MCF 10A (cell line): ENCODE measurements at regions of chr12 and their contacts with region 1.

Region 1: DNA sequence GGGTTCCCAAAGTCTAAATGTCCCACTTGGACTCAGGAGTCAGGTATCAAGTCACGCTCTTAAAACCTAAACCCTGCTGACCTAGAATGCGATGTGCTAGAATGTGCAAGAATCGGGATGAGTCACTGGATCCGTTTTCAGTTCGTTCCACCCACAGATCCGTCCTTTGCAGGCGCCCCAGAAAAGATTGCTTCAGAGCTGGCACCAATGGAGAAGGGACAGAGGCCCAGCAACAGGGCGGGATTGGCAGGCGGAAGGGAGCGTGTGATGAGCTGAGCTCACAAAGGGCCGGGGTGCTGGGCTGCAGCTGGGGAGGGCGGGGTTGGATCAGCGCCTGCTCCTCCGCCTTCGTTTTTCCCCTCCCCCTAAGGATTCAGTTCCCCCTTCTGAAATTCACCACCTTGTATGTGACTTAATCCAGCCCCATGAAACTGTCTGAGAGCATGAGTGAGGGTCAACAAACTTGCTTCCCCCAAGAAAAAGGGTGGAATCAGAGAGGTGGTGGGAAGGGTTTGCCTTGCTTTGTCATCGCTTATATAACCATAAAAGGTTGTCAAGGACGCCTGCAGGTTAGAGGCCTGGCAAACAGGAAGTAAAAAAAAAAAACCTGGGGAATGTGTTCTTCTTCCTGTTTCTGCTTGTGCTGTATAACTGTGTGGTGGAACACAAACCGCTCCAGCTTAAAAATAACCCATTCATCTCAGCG is 2.8 kb upstream of the UBC start:
- DNase-seq: peak; percentile 100
- H3K4me3 Mint-ChIP-seq: peak overlapping the region; percentile 95
- H3K27ac Mint-ChIP-seq: peak overlapping the region; percentile 100
- H3K4me1 Mint-ChIP-seq: peaks cover 44% of the 10 kb centered on the region
- H3K27me3 Mint-ChIP-seq: no peaks in the 10 kb centered on the region
- CTCF ChIP-seq: no peak

Region 2: DNA sequence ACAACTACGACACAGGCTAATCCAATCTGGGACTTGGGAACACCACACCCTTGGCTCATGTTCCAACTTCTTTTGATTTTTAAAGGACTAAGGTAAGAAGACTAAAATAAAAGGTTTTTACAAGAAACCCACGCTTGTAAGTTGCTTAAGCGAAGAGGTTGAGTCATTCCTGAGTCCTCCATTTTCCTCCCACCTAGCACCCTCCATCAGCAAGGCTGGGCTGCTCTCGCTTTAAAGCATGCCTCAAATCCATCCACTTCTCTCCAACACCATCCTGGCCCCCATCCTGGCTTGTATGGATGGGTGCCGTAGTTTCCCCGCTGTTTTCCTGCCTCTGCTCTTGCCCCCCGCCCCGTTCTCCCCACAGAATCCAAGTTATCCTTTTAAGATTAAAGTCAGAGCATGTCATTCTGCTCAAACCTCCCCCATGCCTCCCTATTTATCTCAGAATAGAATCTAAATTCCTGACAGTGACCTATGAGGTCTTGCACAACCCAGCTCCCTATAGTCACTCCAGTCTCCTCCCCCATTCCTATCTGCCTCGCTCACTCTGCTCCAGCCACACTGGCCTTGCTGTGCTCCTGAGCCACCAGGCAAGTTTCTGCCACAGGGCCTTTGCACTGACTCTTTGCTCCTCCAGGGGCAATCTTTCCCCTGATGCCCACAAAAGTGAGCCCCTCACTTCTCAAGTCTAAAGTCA is 88.1 kb before region 1 on chr12:
- CTCF ChIA-PET with region 1: no interaction called
- POLR2A ChIA-PET with region 1: interaction called, 20 read pairs
- intact Hi-C with region 1: no loop called
- DNase-seq: peak; percentile 91
- H3K4me3 Mint-ChIP-seq: peak overlapping the region; percentile 58
- H3K27ac Mint-ChIP-seq: peak overlapping the region; percentile 96
- H3K4me1 Mint-ChIP-seq: peaks cover 43% of the 10 kb centered on the region
- H3K27me3 Mint-ChIP-seq: no peaks in the 10 kb centered on the region
- CTCF ChIP-seq: no peak

Region 3: GRCh38 chr12:124837958-124838803 is 79.1 kb before region 1 on chr12:
- CTCF ChIA-PET with region 1: no interaction called
- POLR2A ChIA-PET with region 1: interaction called, 25 read pairs
- intact Hi-C with region 1: no loop called
- DNase-seq: peak; percentile 99
- H3K4me3 Mint-ChIP-seq: no peak overlapping the region
- H3K27ac Mint-ChIP-seq: peak overlapping the region; percentile 35
- H3K4me1 Mint-ChIP-seq: peaks cover 21% of the 10 kb centered on the region
- H3K27me3 Mint-ChIP-seq: no peaks in the 10 kb centered on the region
- CTCF ChIP-seq: no peak

Region 4: GRCh38 chr12:124863416-124864325 is 53.6 kb before region 1 on chr12 and contains the start of gene SCARB1:
- CTCF ChIA-PET with region 1: interaction called, 5 read pairs
- POLR2A ChIA-PET with region 1: interaction called, 13 read pairs
- intact Hi-C with region 1: no loop called
- DNase-seq: peak; percentile 83
- H3K4me3 Mint-ChIP-seq: peak within 1 kb of the TSS; percentile 76
- H3K27ac Mint-ChIP-seq: peak within 1 kb of the TSS; percentile 86
- H3K4me1 Mint-ChIP-seq: peaks cover 32% of the 10 kb centered on the region
- H3K27me3 Mint-ChIP-seq: no peaks in the 10 kb centered on the region
- CTCF ChIP-seq: no peak
- total RNA-seq, gene SCARB1: 48.2 and 71.0 TPM in 2 replicates

Region 5: DNA sequence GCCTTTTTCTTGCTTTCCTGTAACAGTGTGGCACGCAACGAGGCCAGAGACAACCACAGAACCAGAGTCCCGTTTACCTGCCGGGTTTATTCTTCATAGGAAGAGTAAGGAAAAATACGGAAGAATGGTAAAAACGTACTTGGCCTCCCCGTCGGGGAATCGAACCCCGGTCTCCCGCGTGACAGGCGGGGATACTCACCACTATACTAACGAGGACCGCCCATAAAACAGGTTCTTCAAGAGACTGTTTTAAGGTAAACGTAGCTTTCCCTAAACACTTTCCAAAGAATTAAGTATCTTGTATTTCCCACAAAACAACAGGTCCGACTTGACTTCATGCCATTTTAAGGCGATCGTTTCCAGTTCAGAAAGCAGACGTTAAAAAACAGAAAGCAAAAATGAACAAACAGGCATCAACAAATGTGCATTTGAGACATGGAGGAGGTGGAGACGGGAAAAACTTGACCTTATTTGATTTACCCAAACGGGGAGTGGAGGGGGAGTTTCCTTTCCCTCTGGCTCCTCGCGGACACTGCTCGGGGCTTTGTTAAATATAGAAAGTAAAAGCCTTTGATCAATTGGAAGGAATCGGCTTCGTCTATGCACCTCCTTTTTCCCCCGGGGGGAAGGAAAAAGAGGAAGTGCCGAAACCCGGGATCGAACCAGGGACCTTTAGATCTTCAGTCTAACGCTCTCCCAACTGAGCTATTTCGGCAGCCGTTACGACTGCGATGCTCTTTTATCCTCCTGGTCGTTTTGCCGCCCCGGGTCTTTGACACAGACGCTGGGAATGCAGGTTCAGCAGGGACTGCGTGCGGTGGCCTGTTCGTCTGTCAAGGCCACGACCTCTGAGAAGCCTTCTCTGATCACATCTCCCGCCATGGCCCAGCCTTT is 10.2 kb after region 1 on chr12:
- CTCF ChIA-PET with region 1: interaction called, 12 read pairs
- POLR2A ChIA-PET with region 1: interaction called, 2,121 read pairs
- intact Hi-C with region 1: loop called (anchors 1 kb)
- DNase-seq: peak; percentile 94
- H3K4me3 Mint-ChIP-seq: peak overlapping the region; percentile 73
- H3K27ac Mint-ChIP-seq: peak overlapping the region; percentile 99
- H3K4me1 Mint-ChIP-seq: peaks cover 42% of the 10 kb centered on the region
- H3K27me3 Mint-ChIP-seq: no peaks in the 10 kb centered on the region
- CTCF ChIP-seq: no peak

Region 6: GRCh38 chr12:124992874-124993625 is 75.8 kb after region 1 on chr12:
- CTCF ChIA-PET with region 1: interaction called, 3 read pairs
- POLR2A ChIA-PET with region 1: interaction called, 31 read pairs
- intact Hi-C with region 1: no loop called
- DNase-seq: peak; percentile 80
- H3K4me3 Mint-ChIP-seq: peak overlapping the region; percentile 93
- H3K27ac Mint-ChIP-seq: peak overlapping the region; percentile 25
- H3K4me1 Mint-ChIP-seq: peaks cover 15% of the 10 kb centered on the region
- H3K27me3 Mint-ChIP-seq: no peaks in the 10 kb centered on the region
- CTCF ChIP-seq: peak; percentile 54

Region 7: DNA sequence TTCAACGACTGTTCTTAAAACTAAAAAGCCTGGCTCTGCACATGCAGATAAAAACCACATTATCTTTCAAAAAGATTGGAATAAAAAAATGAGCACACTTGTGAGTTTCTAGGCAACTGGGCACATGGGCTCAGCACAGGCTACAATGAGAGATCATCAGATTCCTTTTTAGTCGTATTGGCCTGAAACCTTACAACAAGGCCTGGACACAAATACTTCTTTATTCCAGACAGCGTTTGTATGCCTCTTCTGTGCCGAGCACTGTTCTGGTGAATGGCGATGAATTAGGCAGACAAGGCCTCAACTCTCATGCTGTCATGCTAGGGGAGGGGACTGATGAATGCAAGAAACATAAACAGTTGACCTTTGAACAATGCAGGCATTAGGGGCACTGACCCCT is 611.0 kb after region 1 on chr12:
- CTCF ChIA-PET with region 1: no interaction called
- POLR2A ChIA-PET with region 1: no interaction called
- intact Hi-C with region 1: no loop called
- DNase-seq: no peak
- H3K4me3 Mint-ChIP-seq: no peak overlapping the region
- H3K27ac Mint-ChIP-seq: no peak overlapping the region
- H3K4me1 Mint-ChIP-seq: no peaks in the 10 kb centered on the region
- H3K27me3 Mint-ChIP-seq: no peaks in the 10 kb centered on the region
- CTCF ChIP-seq: no peak